ENCODE measurements at regions of chr2 and their contacts with region 1.

Region 1: DNA sequence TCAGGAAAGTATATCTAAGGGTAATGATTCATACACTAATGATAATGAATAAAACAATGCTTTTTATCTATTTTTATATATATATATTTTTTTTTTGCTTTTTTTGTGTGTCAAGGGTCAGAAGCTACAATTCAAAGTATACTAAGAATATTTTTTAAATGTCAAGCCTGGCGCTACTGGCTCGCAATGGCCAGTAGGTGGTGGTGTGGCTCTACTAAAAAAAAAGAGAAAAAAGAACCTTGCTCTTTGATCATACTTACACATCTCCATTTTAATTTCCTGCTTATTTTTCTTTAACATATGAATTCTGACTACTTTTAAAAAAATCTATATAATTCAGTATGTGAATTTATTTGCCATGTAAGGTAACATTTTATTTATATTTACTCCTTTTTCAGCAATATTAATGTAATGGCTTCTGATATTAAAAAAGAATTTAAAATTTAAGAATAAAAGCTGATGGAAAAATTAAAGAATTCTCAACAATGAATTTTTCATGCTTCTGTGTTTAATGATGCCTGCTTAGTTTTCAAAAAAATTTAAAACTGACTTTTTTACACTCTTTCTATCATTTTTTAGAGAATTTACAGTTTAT is 232.9 kb downstream of the GULP1 start:
- DNase-seq: no peak
- ATAC-seq: no peak
- H3K4me3 Mint-ChIP-seq: no peak overlapping the region
- H3K27ac Mint-ChIP-seq: no peak overlapping the region
- H3K4me1 Mint-ChIP-seq: no peaks in the 10 kb centered on the region; the same call in 1 of the 2 replicates
- H3K27me3 Mint-ChIP-seq: no peaks in the 10 kb centered on the region
- CTCF ChIP-seq: peak; percentile 64

Region 2: DNA sequence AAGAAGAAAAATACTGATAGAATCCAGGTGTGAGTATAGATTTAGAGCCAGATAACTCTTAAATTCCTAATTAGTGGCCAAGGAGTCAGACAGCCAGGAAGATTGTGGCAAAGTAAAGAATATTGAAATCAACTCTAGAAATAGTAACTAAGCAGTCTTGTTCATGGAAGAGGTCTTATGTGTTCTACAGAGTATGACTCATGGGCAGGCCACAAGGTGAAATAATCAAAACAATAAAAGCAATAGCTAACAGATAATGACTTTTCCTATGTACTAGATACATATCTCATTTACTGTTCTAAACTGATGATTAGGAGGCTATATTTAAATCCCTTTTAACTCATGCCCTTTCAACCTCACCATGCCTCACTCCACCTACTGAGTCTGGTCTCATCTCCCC is 222.1 kb after region 1 on chr2:
- CTCF ChIA-PET with region 1: no interaction called
- POLR2A ChIA-PET with region 1: no interaction called
- DNase-seq: no peak
- ATAC-seq: no peak
- H3K4me3 Mint-ChIP-seq: no peak overlapping the region
- H3K27ac Mint-ChIP-seq: no peak overlapping the region
- H3K4me1 Mint-ChIP-seq: no peaks in the 10 kb centered on the region
- H3K27me3 Mint-ChIP-seq: no peaks in the 10 kb centered on the region
- CTCF ChIP-seq: no peak

Region 3: GRCh38 chr2:188978291-188979081 is 453.9 kb after region 1 on chr2:
- CTCF ChIA-PET with region 1: interaction called, 15 read pairs
- POLR2A ChIA-PET with region 1: no interaction called
- DNase-seq: no peak
- ATAC-seq: peak; percentile 61; the same call in 1 of the 2 replicates
- H3K4me3 Mint-ChIP-seq: no peak overlapping the region
- H3K27ac Mint-ChIP-seq: no peak overlapping the region
- H3K4me1 Mint-ChIP-seq: peaks cover 4% of the 10 kb centered on the region
- H3K27me3 Mint-ChIP-seq: no peaks in the 10 kb centered on the region
- CTCF ChIP-seq: no peak